MCF 10A (cell line): ENCODE measurements at regions of chr10 and their contacts with region 1.

Region 1: GRCh38 chr10:104121520-104122224 is at the start of gene SFR1:
- DNase-seq: peak; percentile 98
- H3K4me3 Mint-ChIP-seq: peak within 1 kb of the TSS; percentile 79
- H3K27ac Mint-ChIP-seq: peak within 1 kb of the TSS; percentile 99
- H3K4me1 Mint-ChIP-seq: peaks cover 45% of the 10 kb centered on the region
- H3K27me3 Mint-ChIP-seq: no peaks in the 10 kb centered on the region
- CTCF ChIP-seq: peak; percentile 52
- total RNA-seq, gene SFR1: 7.7 and 8.9 TPM in 2 replicates

Region 2: DNA sequence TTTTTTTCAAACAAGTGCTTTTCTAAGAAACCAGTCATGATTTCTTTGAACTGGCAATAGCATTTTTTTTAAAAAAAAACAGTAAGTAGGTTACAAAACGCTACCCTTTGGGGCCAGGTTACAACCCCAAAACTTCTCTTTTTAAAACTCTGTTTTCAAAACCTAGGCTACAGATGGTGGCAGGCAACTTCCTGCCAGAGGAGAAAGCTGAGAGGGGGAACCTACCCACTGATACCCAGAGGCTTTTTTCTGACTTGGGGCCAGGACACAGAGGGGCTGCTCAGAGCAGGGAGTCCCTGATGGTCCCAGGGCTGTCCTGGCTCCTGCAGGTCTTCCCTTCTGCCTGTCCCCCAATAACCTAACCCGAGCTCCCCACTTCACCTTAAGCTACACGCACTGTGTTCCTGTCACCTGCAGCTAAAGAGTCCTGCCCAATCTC is 210.6 kb before region 1 on chr10:
- CTCF ChIA-PET with region 1: interaction called, 3 read pairs
- POLR2A ChIA-PET with region 1: interaction called, 20 read pairs
- intact Hi-C with region 1: no loop called
- DNase-seq: no peak
- H3K4me3 Mint-ChIP-seq: peak overlapping the region; percentile 43
- H3K27ac Mint-ChIP-seq: peak overlapping the region; percentile 62
- H3K4me1 Mint-ChIP-seq: peaks cover 32% of the 10 kb centered on the region
- H3K27me3 Mint-ChIP-seq: no peaks in the 10 kb centered on the region
- CTCF ChIP-seq: no peak

Region 3: DNA sequence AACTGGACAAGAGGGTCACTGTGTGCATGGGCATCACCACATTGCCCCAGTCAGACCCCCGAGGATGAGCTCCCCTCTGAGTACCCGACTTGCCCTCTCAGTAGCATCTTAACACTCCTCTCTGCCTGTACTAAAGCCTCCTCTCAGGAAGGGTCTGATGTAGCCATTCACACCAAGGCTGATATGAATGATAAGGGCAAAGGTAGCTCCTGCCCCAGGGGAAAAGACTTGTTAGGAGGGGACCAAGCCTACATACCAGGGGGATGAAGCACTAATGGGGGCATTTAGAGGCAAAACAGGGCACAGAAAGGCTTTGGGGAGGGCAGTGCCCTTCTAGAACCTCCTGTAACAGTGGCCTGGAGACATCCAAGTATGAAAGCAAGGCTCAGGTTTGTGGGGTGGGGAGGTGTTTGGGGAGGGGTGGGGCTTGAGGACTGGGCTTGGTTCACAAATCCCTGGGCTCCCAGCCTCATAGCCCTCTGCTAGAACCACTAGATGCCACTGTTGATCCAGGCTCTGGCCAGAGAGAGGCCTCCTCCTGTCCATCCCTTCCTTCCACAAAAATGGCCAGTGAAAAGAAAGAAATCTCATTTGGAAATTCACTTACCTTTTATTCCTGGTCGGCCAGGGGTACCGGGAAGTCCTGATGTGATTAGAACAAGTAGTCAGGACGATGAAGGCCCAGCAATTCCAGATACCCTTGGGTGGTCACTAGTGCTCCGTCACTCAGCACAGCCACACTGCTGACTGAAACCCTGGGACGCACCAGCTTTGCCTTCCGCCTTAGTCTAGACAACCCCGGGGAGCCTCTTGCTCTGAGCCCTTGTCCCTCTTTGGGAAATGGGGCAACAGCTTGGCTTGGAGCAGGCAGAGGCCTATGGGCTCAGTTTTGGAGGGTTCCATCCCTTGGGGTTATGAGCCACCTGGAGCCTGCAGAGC is 76.3 kb before region 1 on chr10:
- CTCF ChIA-PET with region 1: interaction called, 4 read pairs
- POLR2A ChIA-PET with region 1: interaction called, 9 read pairs
- intact Hi-C with region 1: loop called (anchors 1 kb)
- DNase-seq: peak; percentile 64
- H3K4me3 Mint-ChIP-seq: no peak overlapping the region
- H3K27ac Mint-ChIP-seq: no peak overlapping the region
- H3K4me1 Mint-ChIP-seq: peaks cover 4% of the 10 kb centered on the region
- H3K27me3 Mint-ChIP-seq: no peaks in the 10 kb centered on the region
- CTCF ChIP-seq: peak; percentile 47

Region 4: GRCh38 chr10:104085801-104086400 is 35.8 kb before region 1 on chr10 and contains the start of gene COL17A1:
- CTCF ChIA-PET with region 1: interaction called, 157 read pairs
- POLR2A ChIA-PET with region 1: interaction called, 1,749 read pairs
- intact Hi-C with region 1: loop called (anchors 1 kb)
- DNase-seq: peak; percentile 50
- H3K4me3 Mint-ChIP-seq: peak within 1 kb of the TSS; percentile 83
- H3K27ac Mint-ChIP-seq: peak within 1 kb of the TSS; percentile 97
- H3K4me1 Mint-ChIP-seq: peaks cover 42% of the 10 kb centered on the region
- H3K27me3 Mint-ChIP-seq: no peaks in the 10 kb centered on the region
- CTCF ChIP-seq: no peak
- total RNA-seq, gene COL17A1: 514 and 563 TPM in 2 replicates

Region 5: DNA sequence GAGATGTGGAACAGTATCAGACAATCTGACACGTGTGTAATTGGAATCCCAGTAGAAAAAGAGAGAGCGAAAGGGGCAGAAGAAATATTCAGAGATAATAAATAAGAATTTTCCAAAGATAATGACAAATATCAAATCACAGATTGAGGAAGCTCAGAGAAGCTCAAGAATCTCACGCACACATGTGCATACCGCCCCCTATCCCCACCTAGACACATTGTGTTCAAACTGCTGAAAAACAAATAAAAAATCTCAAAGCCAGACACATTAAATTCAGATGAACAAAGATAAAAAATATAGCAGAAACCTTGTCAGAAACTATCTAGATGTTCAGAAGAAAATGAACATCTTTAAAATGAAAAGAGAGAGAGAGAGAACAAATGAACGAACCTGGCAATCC is 17.5 kb after region 1 on chr10:
- CTCF ChIA-PET with region 1: interaction called, 15 read pairs
- POLR2A ChIA-PET with region 1: interaction called, 16 read pairs
- intact Hi-C with region 1: no loop called
- DNase-seq: peak; percentile 14
- H3K4me3 Mint-ChIP-seq: no peak overlapping the region
- H3K27ac Mint-ChIP-seq: no peak overlapping the region
- H3K4me1 Mint-ChIP-seq: no peaks in the 10 kb centered on the region
- H3K27me3 Mint-ChIP-seq: peaks cover 5% of the 10 kb centered on the region
- CTCF ChIP-seq: no peak

Region 6: DNA sequence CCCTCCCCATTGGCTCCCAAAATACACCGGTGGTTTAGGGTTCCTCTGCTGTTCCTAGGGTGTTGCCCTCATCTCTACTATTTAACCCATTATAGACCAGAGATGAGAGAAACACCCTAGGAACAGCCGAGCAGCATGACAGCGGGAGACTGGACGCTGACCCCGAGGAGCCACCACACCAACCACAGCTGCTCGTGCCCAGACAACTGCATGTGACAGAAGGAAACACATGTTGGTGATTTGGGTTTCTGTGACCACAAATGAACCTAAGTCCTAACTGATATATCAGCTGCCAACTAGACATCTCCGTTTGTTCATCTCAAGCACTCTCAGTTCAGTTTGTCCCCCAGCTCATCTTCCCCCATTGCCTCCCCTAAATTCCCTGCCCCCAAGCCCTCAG is 97.1 kb after region 1 on chr10:
- CTCF ChIA-PET with region 1: no interaction called
- POLR2A ChIA-PET with region 1: no interaction called
- intact Hi-C with region 1: no loop called
- DNase-seq: no peak
- H3K4me3 Mint-ChIP-seq: no peak overlapping the region
- H3K27ac Mint-ChIP-seq: no peak overlapping the region
- H3K4me1 Mint-ChIP-seq: no peaks in the 10 kb centered on the region
- H3K27me3 Mint-ChIP-seq: peaks cover 14% of the 10 kb centered on the region
- CTCF ChIP-seq: no peak